GM12878 (cell line): ENCODE measurements at regions of chr13 and their contacts with region 1.

Region 1: GRCh38 chr13:51814825-51815650 is 11.1 kb upstream of the DHRS12 start:
- DNase-seq: no peak
- ATAC-seq: peak; percentile 80
- H3K4me3 ChIP-seq: peak overlapping the region; percentile 24; the same call in 1 of the 2 replicates
- H3K27ac ChIP-seq: peak overlapping the region; percentile 28
- H3K4me1 ChIP-seq: peaks cover 32% of the 10 kb centered on the region
- H3K27me3 ChIP-seq: no peaks in the 10 kb centered on the region
- CTCF ChIP-seq: peak; percentile 83 to 97 (median 90)
- EP300 ChIP-seq: no peak
- POLR2A ChIP-seq: no peak
- RAD21 ChIP-seq: peak; percentile 88

Region 2: GRCh38 chr13:51825165-51825592 is 10.1 kb after region 1 on chr13:
- CTCF ChIA-PET with region 1: interaction called, 103 read pairs
- POLR2A ChIA-PET with region 1: interaction called, 6 read pairs
- RAD21 ChIA-PET with region 1: interaction called, 19 read pairs
- SMC1A ChIA-PET with region 1: interaction called, 16 read pairs
- in situ Hi-C with region 1: no loop called
- intact Hi-C with region 1: no loop called
- DNase-seq: no peak
- ATAC-seq: peak; percentile 53
- H3K4me3 ChIP-seq: no peak overlapping the region
- H3K27ac ChIP-seq: 0 out of 2 replicates have a peak overlapping the region, but pooled peaks have one; percentile 30
- H3K4me1 ChIP-seq: peaks cover 18% of the 10 kb centered on the region
- H3K27me3 ChIP-seq: no peaks in the 10 kb centered on the region
- CTCF ChIP-seq: no peak
- EP300 ChIP-seq: peak; percentile 16 to 62; a peak in 1 of 4 replicates
- POLR2A ChIP-seq: no peak
- RAD21 ChIP-seq: no peak

Region 3: GRCh38 chr13:51838240-51838846 is 23.3 kb after region 1 on chr13:
- CTCF ChIA-PET with region 1: interaction called, 180 read pairs
- POLR2A ChIA-PET with region 1: interaction called, 4 read pairs
- RAD21 ChIA-PET with region 1: interaction called, 75 read pairs
- SMC1A ChIA-PET with region 1: interaction called, 85 read pairs
- in situ Hi-C with region 1: no loop called
- intact Hi-C with region 1: no loop called
- DNase-seq: no peak
- ATAC-seq: no peak
- H3K4me3 ChIP-seq: no peak overlapping the region
- H3K27ac ChIP-seq: no peak overlapping the region
- H3K4me1 ChIP-seq: no peaks in the 10 kb centered on the region
- H3K27me3 ChIP-seq: peaks cover 0 to 6% of the 10 kb centered on the region in 2 experiments; a peak in 3 of 4 replicates
- CTCF ChIP-seq: no peak
- EP300 ChIP-seq: no peak
- POLR2A ChIP-seq: no peak
- RAD21 ChIP-seq: no peak

Region 4: DNA sequence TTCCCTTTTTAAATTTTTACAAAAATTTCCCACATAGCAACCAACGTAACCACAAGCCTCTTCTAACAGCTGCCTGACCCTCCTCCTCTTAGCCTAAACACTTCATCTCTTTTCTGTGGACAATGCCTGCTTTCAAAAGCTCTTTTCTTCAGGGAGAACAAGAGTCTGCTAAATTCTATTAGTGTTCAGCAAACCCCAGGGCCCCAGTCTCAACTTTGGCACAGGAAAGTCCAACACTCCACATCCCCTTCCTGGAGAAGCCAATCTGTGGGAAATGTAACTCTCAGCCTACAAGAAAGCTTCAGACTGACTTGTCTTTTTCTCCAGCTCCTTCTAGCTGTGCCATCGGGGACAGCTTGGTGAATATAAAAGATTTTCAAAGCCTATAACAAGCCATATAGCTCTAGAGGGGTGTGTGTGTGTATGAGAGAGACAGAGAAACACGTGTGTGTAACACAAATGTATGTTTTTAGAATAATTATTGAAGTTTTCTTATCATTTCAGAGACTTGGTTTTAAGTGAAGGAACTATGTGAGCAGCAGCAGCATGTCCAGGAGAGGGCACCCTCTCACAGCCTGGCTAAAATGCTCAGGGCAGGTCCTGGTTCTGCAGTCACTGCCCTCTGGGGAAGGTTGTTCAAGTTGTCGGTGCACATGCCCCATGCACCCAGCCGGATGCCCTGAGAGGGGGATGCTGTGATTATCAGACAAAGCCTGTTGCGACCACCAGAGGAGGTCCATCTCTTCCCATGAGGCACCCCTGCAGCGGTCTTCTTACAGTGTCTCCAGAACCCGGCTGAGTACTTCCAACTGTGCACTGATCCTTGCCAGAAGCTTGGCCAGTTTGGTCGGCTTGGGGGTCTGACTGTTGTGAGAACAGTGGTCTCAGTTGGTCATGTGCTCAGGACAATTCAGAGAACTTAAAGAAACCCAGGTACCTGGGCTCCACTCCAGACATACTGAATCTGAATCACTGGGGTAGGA is 81.2 kb after region 1 on chr13:
- CTCF ChIA-PET with region 1: interaction called, 4 read pairs
- POLR2A ChIA-PET with region 1: no interaction called
- RAD21 ChIA-PET with region 1: interaction called, 12 read pairs
- SMC1A ChIA-PET with region 1: interaction called, 18 read pairs
- in situ Hi-C with region 1: no loop called
- intact Hi-C with region 1: no loop called
- DNase-seq: no peak
- ATAC-seq: peak; percentile 99
- H3K4me3 ChIP-seq: no peak overlapping the region
- H3K27ac ChIP-seq: no peak overlapping the region
- H3K4me1 ChIP-seq: no peaks in the 10 kb centered on the region
- H3K27me3 ChIP-seq: peaks cover 1 to 4% of the 10 kb centered on the region in 2 experiments; a peak in 2 of 4 replicates
- CTCF ChIP-seq: peak; percentile 78 to 84 (median 83)
- EP300 ChIP-seq: no peak
- POLR2A ChIP-seq: no peak
- RAD21 ChIP-seq: peak; percentile 81

Region 5: DNA sequence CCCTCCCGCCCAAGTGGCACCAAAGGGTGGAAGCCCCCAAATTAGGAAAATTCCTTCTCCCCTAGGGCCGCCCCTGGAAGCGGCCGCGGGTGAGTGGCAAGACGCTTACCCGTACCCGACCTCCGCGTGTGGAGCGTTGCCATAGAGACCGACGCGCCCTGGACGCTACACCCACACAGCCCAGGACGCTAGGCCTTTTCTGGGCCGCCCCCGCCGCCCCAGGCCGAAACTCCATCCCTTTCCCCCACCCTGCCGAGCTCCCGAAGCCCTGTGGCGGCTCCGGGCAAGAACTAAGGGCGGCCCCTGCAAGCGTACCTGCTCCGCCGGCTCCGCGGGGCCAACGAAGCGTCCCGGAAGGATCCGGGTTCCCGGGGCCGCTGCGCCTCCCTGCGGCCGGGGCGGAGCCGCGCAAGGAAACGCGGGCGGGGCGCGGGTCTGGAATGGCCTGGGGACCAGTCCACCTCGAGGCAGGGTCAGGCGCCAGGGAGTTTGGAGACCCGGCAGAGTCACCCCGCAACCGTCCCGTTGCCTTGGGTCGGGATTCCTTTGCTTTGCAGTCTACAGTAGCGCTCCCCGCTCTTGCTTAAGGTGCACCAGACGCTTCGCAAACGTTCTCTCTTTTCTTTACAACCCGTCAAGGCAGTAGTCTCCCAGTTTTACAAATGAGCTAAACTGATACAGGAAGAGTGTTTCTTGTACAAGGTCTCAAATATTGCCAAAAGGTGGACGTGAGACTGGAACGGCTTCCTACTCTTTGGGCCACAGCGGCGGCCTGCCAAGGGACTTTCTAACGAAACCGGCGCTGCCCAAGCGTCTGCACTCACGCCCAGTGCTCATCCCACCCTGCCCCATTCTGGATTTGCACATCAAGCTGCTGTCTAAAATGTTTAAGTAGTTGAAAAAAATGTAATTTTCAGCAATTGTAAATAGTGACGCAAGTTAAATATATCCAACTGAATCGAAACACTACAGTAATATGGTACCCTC is 314.0 kb after region 1 on chr13 and contains the start of gene NEK5:
- CTCF ChIA-PET with region 1: interaction called, 33 read pairs
- POLR2A ChIA-PET with region 1: no interaction called
- RAD21 ChIA-PET with region 1: interaction called, 4 read pairs
- SMC1A ChIA-PET with region 1: interaction called, 26 read pairs
- in situ Hi-C with region 1: no loop called
- intact Hi-C with region 1: loop called (anchors 1 kb)
- DNase-seq: no peak
- ATAC-seq: peak; percentile 86
- H3K4me3 ChIP-seq: peak within 1 kb of the TSS; percentile 65
- H3K27ac ChIP-seq: no peak within 1 kb of the TSS
- H3K4me1 ChIP-seq: 0 out of 2 replicates have a peak, but pooled peaks cover 5% of the 10 kb centered on the region
- H3K27me3 ChIP-seq: peaks cover 2% of the 10 kb centered on the region in 2 experiments; a peak in 2 of 4 replicates
- CTCF ChIP-seq: peak; percentile 56 to 70 (median 57); a peak in 5 of 6 replicates
- EP300 ChIP-seq: no peak
- POLR2A ChIP-seq: no peak
- RAD21 ChIP-seq: peak; percentile 50
- polyA plus RNA-seq, gene NEK5: 0.04 to 0.16 TPM

Region 6: DNA sequence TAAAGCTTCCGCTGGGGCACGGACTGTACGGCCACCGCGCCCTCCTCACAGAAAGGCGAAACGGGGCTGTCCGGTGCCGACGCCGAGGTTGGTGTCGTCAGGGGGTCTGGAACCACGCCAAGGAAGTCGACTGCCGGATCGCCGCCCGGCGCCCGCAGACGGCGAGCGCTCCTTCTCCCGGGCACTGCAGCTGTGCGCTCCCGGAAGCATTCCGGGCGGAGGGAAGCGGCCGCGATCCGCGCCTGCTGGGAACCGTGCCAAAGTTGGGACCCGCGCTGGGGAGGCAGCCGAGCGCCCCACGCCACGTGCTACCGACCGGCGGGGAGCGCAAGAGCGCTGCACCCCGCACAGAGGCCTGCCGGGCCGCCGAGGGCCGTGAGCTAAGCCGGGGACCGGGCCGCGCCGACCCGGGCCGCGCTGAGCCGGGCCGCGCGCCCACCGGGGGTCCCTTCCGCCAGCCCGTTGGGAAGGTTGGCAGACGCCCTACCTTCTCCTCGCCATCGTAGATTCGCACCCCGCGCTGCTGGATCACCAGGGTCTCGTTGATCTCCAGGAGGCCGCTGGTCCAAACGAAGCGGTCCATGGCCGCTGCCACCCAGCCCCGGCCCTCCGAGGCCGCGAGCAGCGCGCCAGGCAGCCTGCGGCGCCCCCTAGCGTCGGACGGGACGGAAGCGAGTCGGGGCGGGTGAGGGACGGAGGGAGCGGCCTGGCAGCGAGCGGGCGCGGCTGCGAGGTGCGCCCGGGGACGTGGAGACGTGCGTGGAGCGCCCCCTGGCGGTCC is 635.2 kb after region 1 on chr13 and contains the start of gene VPS36:
- CTCF ChIA-PET with region 1: no interaction called
- POLR2A ChIA-PET with region 1: no interaction called
- RAD21 ChIA-PET with region 1: interaction called, 5 read pairs
- SMC1A ChIA-PET with region 1: interaction called, 3 read pairs
- in situ Hi-C with region 1: no loop called
- intact Hi-C with region 1: loop called (anchors 10 kb)
- DNase-seq: peak; percentile 72
- ATAC-seq: peak; percentile 81
- H3K4me3 ChIP-seq: peak within 1 kb of the TSS; percentile 69
- H3K27ac ChIP-seq: peak within 1 kb of the TSS; percentile 90
- H3K4me1 ChIP-seq: peaks cover 14% of the 10 kb centered on the region
- H3K27me3 ChIP-seq: no peaks in the 10 kb centered on the region
- CTCF ChIP-seq: peak; percentile 92 to 100 (median 99)
- EP300 ChIP-seq: no peak
- POLR2A ChIP-seq: peak; percentile 94
- RAD21 ChIP-seq: peak; percentile 70
- polyA plus RNA-seq, gene VPS36: 10.3 to 12.3 TPM